ENCODE measurements at regions of chr3 and their contacts with region 1.

Region 1: DNA sequence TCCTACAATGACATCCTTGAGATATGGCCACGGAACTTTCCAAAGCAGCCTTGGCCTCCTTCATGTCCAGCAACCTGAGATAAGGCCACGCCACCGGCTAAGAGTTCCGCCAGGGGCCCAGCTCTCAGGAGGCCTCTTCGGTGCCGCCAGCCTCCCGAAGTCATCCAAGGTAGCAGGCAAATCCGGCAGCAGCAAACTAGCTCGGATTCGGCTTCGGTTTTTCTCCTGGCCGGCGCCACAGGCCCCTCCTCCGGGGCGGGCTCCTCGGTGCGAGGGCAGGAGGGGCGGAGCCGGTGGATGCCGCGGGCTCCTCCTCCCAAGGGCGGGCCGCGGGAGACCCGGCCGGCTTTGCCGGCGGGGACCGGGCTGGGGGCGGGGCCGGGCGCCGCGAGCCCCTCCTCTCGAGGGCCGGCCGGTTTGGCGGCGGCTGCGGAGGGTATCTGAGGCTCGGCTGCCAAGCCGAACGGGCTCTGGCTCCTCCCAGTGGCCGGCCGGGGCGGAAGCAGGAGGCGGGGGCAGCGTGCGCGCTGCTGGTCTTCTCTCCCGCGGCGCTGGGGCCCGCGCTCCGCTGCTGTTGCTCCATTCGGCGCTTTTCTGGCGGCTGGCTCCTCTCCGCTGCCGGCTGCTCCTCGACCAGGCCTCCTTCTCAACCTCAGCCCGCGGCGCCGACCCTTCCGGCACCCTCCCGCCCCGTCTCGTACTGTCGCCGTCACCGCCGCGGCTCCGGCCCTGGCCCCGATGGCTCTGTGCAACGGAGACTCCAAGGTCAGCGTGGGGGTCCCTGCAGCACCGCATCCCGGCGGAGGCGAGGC is at the start of gene GMPS:
- DNase-seq: peak; percentile 96
- H3K4me3 ChIP-seq: peak within 1 kb of the TSS; percentile 93 to 98 (median 96)
- H3K27ac ChIP-seq: peak within 1 kb of the TSS; percentile 79
- H3K4me1 ChIP-seq: peaks cover 20% of the 10 kb centered on the region
- H3K27me3 ChIP-seq: no peaks in the 10 kb centered on the region
- CTCF ChIP-seq: peak; percentile 8 to 33
- POLR2A ChIP-seq: peak; percentile 59
- total RNA-seq, gene GMPS: 66.0 and 67.5 TPM in 2 replicates

Region 2: GRCh38 chr3:155890671-155891190 is 20.4 kb after region 1 on chr3:
- CTCF ChIA-PET with region 1: interaction called, 5 read pairs
- POLR2A ChIA-PET with region 1: no interaction called
- dilution Hi-C with region 1: no loop called
- intact Hi-C with region 1: loop called (anchors 1 kb)
- DNase-seq: peak; percentile 85
- H3K4me3 ChIP-seq: no peak overlapping the region
- H3K27ac ChIP-seq: peak overlapping the region; percentile 12
- H3K4me1 ChIP-seq: peaks cover 13% of the 10 kb centered on the region
- H3K27me3 ChIP-seq: no peaks in the 10 kb centered on the region
- CTCF ChIP-seq: no peak
- POLR2A ChIP-seq: no peak

Region 3: GRCh38 chr3:155912579-155913190 is 42.3 kb after region 1 on chr3:
- CTCF ChIA-PET with region 1: no interaction called
- POLR2A ChIA-PET with region 1: no interaction called
- dilution Hi-C with region 1: no loop called
- intact Hi-C with region 1: loop called (anchors 1 kb)
- DNase-seq: no peak
- H3K4me3 ChIP-seq: no peak overlapping the region
- H3K27ac ChIP-seq: no peak overlapping the region
- H3K4me1 ChIP-seq: peaks cover 7% of the 10 kb centered on the region
- H3K27me3 ChIP-seq: no peaks in the 10 kb centered on the region
- CTCF ChIP-seq: no peak
- POLR2A ChIP-seq: no peak

Region 4: DNA sequence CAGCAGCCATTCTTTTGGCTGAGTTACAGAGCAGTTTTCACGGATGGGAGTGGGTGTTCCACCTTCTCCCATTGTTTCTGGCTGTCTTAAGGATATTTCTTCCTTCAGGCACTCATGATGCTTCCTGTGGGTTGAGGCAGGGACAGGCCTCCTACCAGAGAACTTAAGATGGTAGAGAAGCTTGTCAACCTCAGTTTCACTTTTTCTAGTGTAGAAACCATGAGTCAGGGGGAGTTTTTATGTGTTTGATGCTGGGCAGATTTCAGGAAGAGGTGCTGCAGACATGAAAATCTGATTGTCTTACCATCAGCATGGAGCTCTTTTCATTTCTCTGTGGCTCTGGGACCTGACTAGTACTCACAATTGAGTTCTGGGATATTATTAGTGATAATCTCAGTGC is 1681.6 kb after region 1 on chr3:
- CTCF ChIA-PET with region 1: no interaction called
- POLR2A ChIA-PET with region 1: no interaction called
- dilution Hi-C with region 1: no loop called
- intact Hi-C with region 1: no loop called
- DNase-seq: no peak
- H3K4me3 ChIP-seq: no peak overlapping the region
- H3K27ac ChIP-seq: no peak overlapping the region
- H3K4me1 ChIP-seq: no peaks in the 10 kb centered on the region
- H3K27me3 ChIP-seq: no peaks in the 10 kb centered on the region
- CTCF ChIP-seq: no peak
- POLR2A ChIP-seq: no peak